OCI-LY7 (cell line): ENCODE measurements at regions of chr16 and their contacts with region 1.

Region 1: DNA sequence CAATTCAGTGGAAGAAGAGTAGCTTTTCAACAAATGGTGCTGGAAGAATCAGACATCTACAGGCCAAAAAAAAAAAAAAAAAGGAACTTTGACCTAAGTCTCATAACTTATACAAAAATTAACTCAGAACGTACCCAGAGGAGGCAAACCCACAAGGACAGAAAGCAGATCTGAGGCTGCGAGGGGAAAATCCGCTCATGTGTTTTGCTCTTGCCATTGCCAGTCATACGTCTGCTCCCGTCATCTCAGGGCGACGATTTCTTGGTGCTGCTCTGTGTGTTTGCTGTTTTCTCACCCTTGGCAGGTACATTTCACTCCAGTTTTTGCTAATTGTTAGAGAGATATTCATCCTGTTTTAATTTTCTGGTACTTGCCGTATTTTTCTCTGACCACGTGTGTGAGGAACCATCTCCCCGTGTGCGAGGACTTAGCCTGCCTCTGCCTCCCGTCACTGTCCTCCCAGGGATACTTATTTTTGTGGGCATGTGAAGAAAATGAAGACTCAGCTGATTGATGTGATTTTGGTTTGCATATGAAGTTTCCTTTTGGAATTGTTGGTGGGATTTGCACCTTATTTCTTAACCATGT is 33.4 kb upstream of the ACSF3 start:
- DNase-seq: peak; percentile 62
- H3K4me3 ChIP-seq: peak overlapping the region; percentile 28
- H3K27ac ChIP-seq: peak overlapping the region; percentile 36
- H3K4me1 ChIP-seq: peaks cover 54% of the 10 kb centered on the region
- CTCF ChIP-seq: no peak

Region 2: DNA sequence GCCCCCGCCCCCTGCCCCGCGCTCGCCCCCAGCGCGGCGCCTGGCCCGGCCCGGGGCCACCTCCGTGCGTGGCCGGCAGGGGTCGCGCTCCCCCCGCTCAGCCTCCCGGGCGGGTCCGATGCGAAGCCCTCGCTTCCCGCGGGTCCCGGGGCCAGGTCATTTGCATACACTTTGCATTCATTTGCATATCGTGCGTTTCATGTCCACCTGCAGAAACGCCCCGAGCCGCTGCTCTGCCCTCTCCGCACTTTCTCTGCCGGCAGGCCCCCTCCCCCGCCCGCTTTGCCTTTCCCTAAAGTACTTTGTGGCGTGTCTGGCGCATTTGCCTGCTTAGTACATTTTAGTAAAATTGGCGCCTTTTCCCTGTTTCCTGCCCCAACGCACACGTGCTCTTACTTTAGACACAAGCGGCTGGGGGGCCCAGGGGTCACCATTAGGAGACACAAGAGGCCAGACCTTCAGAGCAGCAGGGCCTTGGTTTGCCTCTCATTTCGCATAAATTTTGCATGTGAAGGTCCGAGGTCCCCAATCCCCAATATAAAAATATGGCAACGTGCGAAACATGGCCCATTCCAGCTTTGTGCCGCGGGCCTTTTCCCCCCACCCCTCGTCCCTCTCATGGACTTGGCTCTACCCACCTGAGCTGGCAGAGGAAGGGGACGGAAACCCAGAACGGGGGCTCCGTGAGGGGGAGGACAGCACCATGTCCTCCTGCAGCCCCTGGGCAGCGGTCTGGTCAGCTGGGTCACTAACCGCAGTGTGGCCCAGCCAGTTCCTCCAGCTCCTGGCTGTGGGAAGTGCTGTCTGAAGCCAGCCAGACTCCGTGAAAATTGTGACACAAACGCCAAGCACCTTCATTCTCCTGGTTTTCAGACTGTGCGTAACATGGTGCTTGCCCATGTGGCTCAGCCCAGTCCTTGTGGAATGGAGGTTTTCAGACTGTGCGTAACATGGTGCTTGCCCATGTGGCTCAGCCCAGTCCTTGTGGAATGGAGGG is 118.1 kb before region 1 on chr16:
- CTCF ChIA-PET with region 1: no interaction called
- POLR2A ChIA-PET with region 1: no interaction called
- intact Hi-C with region 1: loop called (anchors 5 kb)
- DNase-seq: peak; percentile 84
- H3K4me3 ChIP-seq: peak overlapping the region; percentile 47
- H3K27ac ChIP-seq: peak overlapping the region; percentile 2
- H3K4me1 ChIP-seq: peaks cover 49% of the 10 kb centered on the region
- CTCF ChIP-seq: peak; percentile 63

Region 3: GRCh38 chr16:88977018-88977811 is 83.1 kb before region 1 on chr16 and contains the start of gene CBFA2T3:
- CTCF ChIA-PET with region 1: no interaction called
- POLR2A ChIA-PET with region 1: no interaction called
- intact Hi-C with region 1: loop called (anchors 2 kb)
- DNase-seq: peak; percentile 79
- H3K4me3 ChIP-seq: peak within 1 kb of the TSS; percentile 60
- H3K27ac ChIP-seq: peak within 1 kb of the TSS; percentile 91
- H3K4me1 ChIP-seq: peaks cover 89% of the 10 kb centered on the region
- CTCF ChIP-seq: no peak
- total RNA-seq, gene CBFA2T3: 1.1 and 2.2 TPM in 2 replicates

Region 4: GRCh38 chr16:88993166-88993761 is 67.0 kb before region 1 on chr16:
- CTCF ChIA-PET with region 1: no interaction called
- POLR2A ChIA-PET with region 1: interaction called, 3 read pairs
- intact Hi-C with region 1: loop called (anchors 1 kb)
- DNase-seq: peak; percentile 67
- H3K4me3 ChIP-seq: peak overlapping the region; percentile 43
- H3K27ac ChIP-seq: peak overlapping the region; percentile 99
- H3K4me1 ChIP-seq: peaks cover 42% of the 10 kb centered on the region
- CTCF ChIP-seq: no peak

Region 5: DNA sequence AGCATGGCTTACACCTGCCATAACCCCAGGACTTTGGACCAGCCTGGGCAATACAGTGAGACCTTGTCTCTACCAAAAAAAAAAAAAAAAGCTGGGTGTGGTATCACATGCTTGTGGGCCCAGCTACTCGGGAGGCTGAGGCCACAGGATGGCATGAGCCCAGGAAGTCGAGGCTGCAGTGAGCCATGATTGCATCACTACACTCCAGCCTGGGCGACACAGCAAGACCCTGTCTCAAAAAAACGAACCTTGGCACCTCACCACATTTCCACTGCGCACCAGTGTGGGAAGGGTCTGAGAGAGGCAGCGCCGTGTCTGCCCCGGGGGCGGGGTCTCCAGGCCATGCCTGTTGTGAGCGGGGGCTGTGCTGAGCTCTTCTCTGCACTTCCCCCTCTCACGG is 39.6 kb after region 1 on chr16:
- CTCF ChIA-PET with region 1: interaction called, 3 read pairs
- POLR2A ChIA-PET with region 1: interaction called, 4 read pairs
- intact Hi-C with region 1: loop called (anchors 1 kb)
- DNase-seq: peak; percentile 28
- H3K4me3 ChIP-seq: peak overlapping the region; percentile 99
- H3K27ac ChIP-seq: peak overlapping the region; percentile 98
- H3K4me1 ChIP-seq: peaks cover 53% of the 10 kb centered on the region
- CTCF ChIP-seq: no peak

Region 6: GRCh38 chr16:89122322-89122851 is 62.1 kb after region 1 on chr16:
- CTCF ChIA-PET with region 1: no interaction called
- POLR2A ChIA-PET with region 1: no interaction called
- intact Hi-C with region 1: loop called (anchors 2 kb)
- DNase-seq: peak; percentile 96
- H3K4me3 ChIP-seq: peak overlapping the region; percentile 43
- H3K27ac ChIP-seq: peak overlapping the region; percentile 97
- H3K4me1 ChIP-seq: peaks cover 38% of the 10 kb centered on the region
- CTCF ChIP-seq: peak; percentile 50; the same call in 1 of the 2 replicates